Common myeloid progenitor, CD34-positive (primary cell): ENCODE measurements at regions of chr5 and their contacts with region 1.

Region 1: DNA sequence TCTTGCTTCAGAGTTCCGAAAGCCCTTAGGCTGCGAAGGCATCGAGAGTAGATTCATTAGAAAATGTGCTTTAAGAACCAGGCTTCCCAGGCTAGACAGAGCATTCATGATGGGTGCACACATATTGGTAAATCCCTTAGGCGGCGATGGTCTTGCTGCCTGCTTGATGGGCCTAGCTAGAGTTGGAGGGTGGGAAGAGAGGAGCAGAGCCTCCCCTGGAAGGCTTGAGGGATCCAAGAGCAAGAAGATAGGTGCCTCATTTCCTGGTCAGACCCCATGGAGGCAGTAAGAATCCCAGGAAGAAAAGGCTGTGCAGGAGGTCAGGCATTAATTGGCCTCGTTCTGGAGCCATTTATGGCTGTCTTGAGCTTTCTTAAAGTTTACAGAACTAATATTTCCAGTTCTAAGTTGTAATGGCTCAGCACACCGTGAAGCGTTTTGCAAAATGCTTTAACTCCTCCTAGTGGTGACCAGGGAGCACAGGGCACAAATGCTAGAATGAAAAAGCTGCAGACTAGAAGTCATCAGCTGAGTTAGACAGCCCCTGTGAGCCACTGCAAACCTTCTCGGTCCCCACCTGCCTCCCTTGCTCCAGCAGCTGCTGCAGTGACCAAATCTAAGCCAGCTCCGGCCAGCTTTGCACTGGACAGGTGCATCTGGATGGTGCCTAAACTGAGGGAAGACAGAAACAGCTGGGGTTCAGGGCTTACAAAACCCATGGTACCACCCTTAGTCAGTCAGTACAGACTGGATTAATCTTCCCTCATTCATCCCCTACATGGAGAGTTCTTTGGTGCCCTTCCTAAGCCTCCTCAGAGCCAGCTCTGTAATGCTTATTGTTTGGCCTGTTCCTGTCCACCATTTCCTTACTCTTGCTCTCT is 14.7 kb downstream of the SLC45A2 start:
- DNase-seq: peak; percentile 39 to 61 (median 60)
- H3K4me3 ChIP-seq: no peak overlapping the region
- H3K27ac ChIP-seq: no peak overlapping the region
- H3K4me1 ChIP-seq: peaks cover 0 to under 1% (median 0%) of the 10 kb centered on the region in 4 experiments
- H3K27me3 ChIP-seq: peaks cover 0 to 2% (median 0%) of the 10 kb centered on the region in 5 experiments

Region 2: DNA sequence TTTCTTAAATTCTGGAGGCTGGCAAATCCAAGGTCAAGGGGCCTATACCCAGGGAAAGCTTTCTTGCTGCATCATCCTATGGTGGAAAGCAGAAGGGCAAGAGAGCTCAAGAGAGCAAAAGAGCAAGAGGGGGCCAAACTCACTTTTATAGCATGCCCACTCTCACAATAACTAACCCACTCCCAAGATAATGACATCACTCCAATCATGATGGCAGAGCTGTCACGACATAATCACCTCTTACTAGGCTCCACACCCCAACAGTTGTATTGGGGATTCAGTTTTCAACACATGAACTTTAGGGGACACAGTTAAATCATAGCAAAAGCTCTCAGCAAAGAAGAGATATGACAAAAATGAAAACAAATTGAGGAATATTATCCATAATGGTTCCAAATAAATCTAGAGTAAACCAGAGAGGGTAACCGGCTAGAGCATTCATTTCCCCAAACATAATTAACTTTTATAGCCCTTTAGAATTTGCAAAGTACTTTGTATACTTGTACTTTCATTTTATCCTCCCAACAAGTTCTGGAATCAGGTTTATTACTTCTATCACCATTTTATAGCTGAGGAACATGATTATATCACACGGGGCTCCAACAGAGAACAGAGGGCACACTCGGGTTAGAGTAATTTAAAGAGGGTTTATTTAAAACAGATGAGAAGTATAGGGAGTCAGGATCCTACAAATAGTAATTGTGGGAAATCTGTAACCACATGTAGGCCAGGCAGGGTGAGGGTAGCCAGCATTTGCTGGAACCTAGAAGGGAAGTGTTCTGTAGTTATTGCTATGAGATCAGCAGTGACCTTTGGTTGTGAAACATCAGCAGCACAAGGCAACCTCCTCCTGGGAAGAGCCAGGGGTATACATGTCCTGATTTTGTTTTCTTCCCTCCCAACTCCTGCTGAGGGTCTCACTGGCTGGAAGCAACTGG is 536.2 kb before region 1 on chr5:
- CTCF ChIA-PET with region 1: interaction called, 10 read pairs
- POLR2A ChIA-PET with region 1: no interaction called
- DNase-seq: no peak
- H3K4me3 ChIP-seq: no peak overlapping the region
- H3K27ac ChIP-seq: no peak overlapping the region
- H3K4me1 ChIP-seq: no peaks in the 10 kb centered on the region
- H3K27me3 ChIP-seq: no peaks in the 10 kb centered on the region

Region 3: GRCh38 chr5:33470544-33470943 is 499.3 kb before region 1 on chr5:
- CTCF ChIA-PET with region 1: interaction called, 19 read pairs
- POLR2A ChIA-PET with region 1: no interaction called
- DNase-seq: peak; percentile 8 to 23 (median 20)
- H3K4me3 ChIP-seq: no peak overlapping the region
- H3K27ac ChIP-seq: no peak overlapping the region
- H3K4me1 ChIP-seq: no peaks in the 10 kb centered on the region
- H3K27me3 ChIP-seq: no peaks in the 10 kb centered on the region

Region 4: GRCh38 chr5:33957577-33958150 is 12.1 kb before region 1 on chr5:
- CTCF ChIA-PET with region 1: interaction called, 12 read pairs
- POLR2A ChIA-PET with region 1: no interaction called
- DNase-seq: no peak
- H3K4me3 ChIP-seq: no peak overlapping the region
- H3K27ac ChIP-seq: no peak overlapping the region
- H3K4me1 ChIP-seq: no peaks in the 10 kb centered on the region
- H3K27me3 ChIP-seq: peaks cover 0 to 4% (median 0%) of the 10 kb centered on the region in 5 experiments

Region 5: DNA sequence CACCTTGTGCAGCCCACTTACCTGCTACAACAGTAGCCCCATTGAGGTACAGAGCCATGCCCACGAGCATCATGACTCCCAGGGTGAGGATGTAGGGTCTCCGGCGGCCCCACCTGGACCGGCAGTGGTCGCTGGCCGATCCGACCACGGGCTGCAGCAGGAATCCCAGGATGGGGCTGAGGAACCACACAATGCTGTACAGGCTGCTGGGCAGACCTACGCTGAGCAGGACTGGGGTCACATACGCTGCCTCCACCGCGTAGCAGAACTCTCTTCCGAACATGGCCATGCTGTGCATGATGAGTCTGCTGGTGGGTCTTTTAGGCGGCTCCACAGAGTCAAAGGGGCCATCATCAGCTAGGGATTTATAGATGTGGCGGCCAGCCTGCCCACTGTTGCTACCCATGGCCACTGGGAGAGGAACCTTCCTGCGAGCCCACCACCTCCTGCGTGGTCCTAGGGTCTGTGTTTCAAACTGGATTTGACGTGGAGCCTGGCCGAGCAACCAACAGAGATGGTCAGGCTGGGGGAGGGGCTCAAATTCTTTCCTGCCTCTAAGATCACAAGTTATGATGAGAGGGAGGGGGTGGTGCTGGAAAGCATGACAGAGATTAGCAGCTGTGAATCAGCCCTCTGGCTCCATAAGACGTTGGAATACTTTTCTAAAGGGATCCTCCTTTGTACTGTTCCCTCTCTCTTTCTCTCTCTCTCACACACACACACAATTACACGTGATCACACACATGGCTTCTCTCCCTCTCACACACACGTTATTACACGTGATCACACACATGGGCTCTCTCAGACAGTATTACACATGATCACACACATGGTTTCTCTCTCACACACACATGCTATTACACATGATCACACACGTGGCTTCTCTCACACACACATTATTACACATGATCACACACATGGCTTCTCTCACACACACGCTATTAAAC is 14.6 kb after region 1 on chr5 and contains the start of gene SLC45A2:
- CTCF ChIA-PET with region 1: interaction called, 11 read pairs
- POLR2A ChIA-PET with region 1: no interaction called
- DNase-seq: no peak
- H3K4me3 ChIP-seq: no peak within 1 kb of the TSS
- H3K27ac ChIP-seq: no peak within 1 kb of the TSS
- H3K4me1 ChIP-seq: no peaks in the 10 kb centered on the region
- H3K27me3 ChIP-seq: no peaks in the 10 kb centered on the region